Uterus (tissue), 4 donors: ENCODE measurements at regions of chr2 and their contacts with region 1.

Region 1: GRCh38 chr2:96509114-96509846 is 4.1 kb upstream of the NEURL3 start:
- DNase-seq: peak; percentile 86 to 88
- H3K4me3 ChIP-seq: no peak overlapping the region
- H3K27ac ChIP-seq: no peak overlapping the region
- H3K4me1 ChIP-seq: no peaks in the 10 kb centered on the region
- H3K27me3 ChIP-seq: no peaks in the 10 kb centered on the region
- CTCF ChIP-seq: peak; percentile 96 to 97 (median 96)
- POLR2A ChIP-seq: no peak

Region 2: GRCh38 chr2:96386470-96386869 is 122.8 kb before region 1 on chr2:
- intact Hi-C with region 1: no loop called
- DNase-seq: no peak
- H3K4me3 ChIP-seq: no peak overlapping the region
- H3K27ac ChIP-seq: no peak overlapping the region
- H3K4me1 ChIP-seq: no peaks in the 10 kb centered on the region
- H3K27me3 ChIP-seq: no peaks in the 10 kb centered on the region
- CTCF ChIP-seq: no peak
- POLR2A ChIP-seq: no peak

Region 3: GRCh38 chr2:96407041-96407918 is 102.0 kb before region 1 on chr2:
- intact Hi-C with region 1: loop called (anchors 5 kb)
- DNase-seq: peak; percentile 46 to 58
- H3K4me3 ChIP-seq: no peak overlapping the region
- H3K27ac ChIP-seq: no peak overlapping the region
- H3K4me1 ChIP-seq: no peaks in the 10 kb centered on the region
- H3K27me3 ChIP-seq: no peaks in the 10 kb centered on the region
- CTCF ChIP-seq: peak; percentile 64 to 81 (median 74)
- POLR2A ChIP-seq: no peak

Region 4: DNA sequence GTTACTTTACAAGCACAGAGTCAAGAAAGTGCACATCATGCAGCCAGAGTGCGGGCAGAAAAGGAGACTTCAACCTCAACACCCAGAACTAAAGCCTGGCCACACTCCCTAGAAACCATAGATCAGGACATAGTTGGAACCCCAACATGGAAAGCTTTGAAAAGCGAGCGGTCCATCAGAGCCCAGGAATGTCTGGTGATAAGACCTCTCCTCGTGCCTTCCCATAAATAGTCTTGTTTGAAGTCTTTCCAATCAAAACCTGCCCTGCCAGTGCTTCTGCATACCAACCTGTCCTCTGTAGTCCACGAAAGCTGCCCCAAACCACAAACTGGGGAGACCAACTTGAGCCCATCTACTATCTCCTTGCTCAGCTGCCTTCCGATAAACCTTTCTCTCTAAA is 59.6 kb before region 1 on chr2:
- intact Hi-C with region 1: no loop called
- DNase-seq: no peak
- H3K4me3 ChIP-seq: no peak overlapping the region
- H3K27ac ChIP-seq: no peak overlapping the region
- H3K4me1 ChIP-seq: no peaks in the 10 kb centered on the region
- H3K27me3 ChIP-seq: no peaks in the 10 kb centered on the region
- CTCF ChIP-seq: no peak
- POLR2A ChIP-seq: no peak

Region 5: DNA sequence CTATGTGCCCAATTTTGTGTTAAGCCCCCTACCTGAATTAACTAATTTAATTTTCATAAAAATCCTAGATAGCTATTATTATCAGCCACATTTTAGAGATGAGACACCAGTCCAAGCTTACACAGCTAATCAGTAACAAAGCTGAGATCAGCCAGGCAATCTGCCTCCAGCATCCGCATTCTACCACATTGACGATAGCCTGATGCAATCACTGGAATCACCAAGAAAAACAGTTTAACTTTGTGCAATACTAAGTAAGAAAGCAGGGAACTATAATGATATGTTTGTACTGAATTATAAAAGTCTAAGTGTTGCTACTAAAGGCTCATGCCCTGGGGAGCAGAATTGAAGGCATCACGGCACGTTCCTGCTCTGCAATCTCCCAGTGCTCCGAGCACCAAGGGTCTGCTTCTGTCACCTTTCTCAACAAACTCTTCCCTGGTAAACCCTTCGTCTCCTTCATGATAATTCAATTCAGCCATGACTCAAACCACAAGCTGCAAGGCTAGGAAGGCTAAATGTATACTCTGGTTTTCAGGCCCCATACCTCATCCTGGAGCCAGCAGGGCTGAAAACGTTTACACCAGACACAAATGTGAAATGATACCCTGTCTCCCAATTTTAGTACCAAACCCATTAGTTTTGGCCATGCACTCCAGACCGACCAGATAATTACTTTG is 109.5 kb after region 1 on chr2:
- intact Hi-C with region 1: no loop called
- DNase-seq: peak in 1 of 2 donors; percentile 54
- H3K4me3 ChIP-seq: no peak overlapping the region
- H3K27ac ChIP-seq: peak overlapping the region; percentile 22 to 65
- H3K4me1 ChIP-seq: no peaks in the 10 kb centered on the region
- H3K27me3 ChIP-seq: no peaks in the 10 kb centered on the region
- CTCF ChIP-seq: no peak
- POLR2A ChIP-seq: no peak

Region 6: DNA sequence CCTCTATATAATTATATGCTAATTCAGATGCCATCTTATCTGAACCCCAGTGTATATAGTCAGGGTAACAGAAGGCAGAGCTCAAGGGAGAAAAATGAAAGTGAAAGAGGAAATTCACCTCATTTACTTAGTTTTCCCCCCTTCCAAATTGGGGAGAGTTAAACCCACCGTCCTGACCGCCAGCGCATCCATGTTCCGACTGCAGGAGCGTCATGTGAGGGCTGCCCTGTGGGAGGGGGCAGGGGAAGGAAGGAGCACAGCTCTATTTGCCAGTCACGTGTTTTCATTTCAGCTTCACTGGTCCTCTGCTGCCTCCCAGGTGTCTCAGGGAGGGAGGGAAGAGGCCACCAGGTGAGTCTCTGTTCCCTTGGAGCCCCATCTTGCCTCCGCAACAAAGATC is 264.6 kb after region 1 on chr2:
- intact Hi-C with region 1: no loop called
- DNase-seq: no peak
- H3K4me3 ChIP-seq: no peak overlapping the region
- H3K27ac ChIP-seq: no peak overlapping the region
- H3K4me1 ChIP-seq: no peaks in the 10 kb centered on the region
- H3K27me3 ChIP-seq: no peaks in the 10 kb centered on the region
- CTCF ChIP-seq: no peak
- POLR2A ChIP-seq: no peak